GM10248 (cell line): ENCODE measurements at regions of chr21 and their contacts with region 1.

Region 1: DNA sequence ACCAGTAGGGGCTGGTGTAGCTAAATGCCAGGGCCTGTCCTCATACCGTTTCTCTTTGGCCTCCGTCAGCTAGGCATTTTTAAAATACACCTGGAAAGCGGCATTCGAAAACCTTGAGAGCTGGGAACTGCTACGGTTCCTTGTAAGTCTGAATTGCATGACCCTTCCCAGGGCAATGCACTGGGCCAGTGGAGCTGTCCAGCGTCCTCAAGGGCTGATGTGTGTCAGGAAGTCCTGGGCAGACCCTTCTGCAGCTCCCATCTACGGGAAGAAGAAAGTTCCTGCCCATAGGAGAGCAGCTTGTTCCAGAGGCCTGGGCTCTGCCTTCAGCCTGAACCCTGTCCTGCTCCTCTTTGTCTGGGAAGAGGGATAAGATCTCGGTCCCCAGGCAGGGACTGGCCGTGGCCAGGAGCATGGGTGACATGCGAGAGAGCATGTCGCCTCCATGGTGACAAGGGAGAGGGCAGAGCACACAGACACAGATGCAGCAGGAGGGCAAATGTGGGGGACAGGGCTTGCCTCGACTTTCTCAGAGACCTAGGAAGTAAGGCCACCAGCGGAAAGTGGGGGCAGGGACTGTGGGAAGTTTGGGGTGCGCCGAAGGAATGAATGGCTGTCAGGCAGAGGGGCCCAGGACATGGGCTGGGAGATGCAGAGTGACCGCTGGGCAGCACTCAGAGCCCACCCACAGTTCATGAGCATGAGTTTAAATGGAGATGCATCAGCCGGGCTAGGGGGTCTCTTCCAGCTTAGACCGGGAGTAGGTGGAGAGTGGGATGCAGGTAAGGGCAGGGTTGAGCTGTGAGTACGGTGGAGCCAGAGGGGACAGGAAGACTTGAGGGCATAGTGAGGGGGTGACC is 34.3 kb downstream of the UBASH3A start:
- DNase-seq: no peak
- CTCF ChIP-seq: no peak

Region 2: DNA sequence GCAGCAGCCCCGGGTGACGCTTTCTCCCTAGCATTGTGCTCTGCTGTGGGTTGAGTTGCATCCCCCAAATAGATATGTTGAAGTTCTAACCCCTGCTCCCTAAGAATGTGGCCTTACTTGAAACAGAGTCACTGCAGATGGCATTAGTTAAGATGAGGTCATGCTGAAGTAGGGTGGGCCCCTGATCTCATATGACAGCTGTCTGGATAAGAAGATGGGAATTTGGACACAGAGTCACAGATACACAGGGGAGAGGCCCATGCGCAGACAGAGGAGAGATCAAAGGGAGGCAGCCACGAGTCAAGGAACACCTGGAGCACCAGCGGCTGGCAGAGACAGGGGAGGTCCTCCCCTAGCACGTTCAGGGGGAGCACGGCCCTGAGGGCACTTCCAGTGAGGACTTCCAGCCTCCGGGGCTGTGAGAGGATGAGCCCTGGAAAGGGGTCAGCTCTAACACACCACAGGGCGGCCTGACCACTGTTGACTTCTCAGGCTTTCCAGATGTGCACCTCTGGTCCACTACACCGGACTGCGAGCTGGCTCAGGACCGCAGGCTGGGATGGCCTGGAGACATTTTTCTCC is 172.7 kb before region 1 on chr21:
- CTCF ChIA-PET with region 1: no interaction called
- POLR2A ChIA-PET with region 1: no interaction called
- DNase-seq: no peak
- CTCF ChIP-seq: no peak

Region 3: GRCh38 chr21:42392721-42393442 is 45.1 kb before region 1 on chr21:
- CTCF ChIA-PET with region 1: no interaction called
- POLR2A ChIA-PET with region 1: no interaction called
- DNase-seq: peak; percentile 72
- CTCF ChIP-seq: no peak

Region 4: GRCh38 chr21:42424914-42425541 is 13.0 kb before region 1 on chr21:
- CTCF ChIA-PET with region 1: interaction called, 18 read pairs
- POLR2A ChIA-PET with region 1: interaction called, 3 read pairs
- DNase-seq: no peak
- CTCF ChIP-seq: no peak